Heart left ventricle (tissue), 16 donors: ENCODE measurements at regions of chr2 and their contacts with region 1.

Region 1: DNA sequence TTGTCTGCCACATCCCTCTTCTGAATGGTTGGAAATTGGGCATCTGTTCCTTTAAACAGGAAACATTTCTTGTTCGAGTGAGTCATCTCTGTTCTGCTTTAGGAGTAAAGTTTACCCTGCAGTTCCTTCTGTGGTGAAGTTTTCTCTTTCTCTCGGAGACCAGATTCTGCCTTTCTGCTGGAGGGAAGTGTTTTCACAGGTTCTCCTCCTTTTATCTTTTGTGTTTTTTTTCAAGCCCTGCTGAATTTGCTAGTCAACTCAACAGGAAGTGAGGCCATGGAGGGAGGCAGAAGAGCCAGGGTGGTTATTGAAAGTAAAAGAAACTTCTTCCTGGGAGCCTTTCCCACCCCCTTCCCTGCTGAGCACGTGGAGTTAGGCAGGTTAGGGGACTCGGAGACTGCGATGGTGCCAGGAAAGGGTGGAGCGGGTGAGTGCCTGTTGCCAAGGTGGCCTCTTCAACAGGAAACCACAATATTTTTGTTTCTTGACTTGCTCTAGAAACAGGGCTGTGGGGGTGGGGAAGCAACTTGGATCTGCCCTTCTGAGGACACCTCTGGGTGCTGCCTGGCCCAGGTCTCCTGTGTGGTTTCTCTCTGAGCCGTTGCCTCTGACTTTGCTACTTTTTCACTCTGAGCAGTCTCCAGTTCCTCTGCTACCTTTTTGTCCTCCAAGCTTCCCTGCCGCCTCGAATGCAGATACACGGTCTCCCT is 2.2 kb upstream of the CASP8 start:
- DNase-seq: peak; percentile 60 to 76 (median 67)
- ATAC-seq: peak; percentile 52 to 84 (median 78)
- H3K4me3 ChIP-seq: peak overlapping the region; percentile 16 to 73 (median 60)
- H3K27ac ChIP-seq: peak overlapping the region; percentile 52 to 97 (median 84)
- H3K4me1 ChIP-seq: peaks cover 0 to 79% (median 4%) of the 10 kb centered on the region in 12 donors
- H3K27me3 ChIP-seq: no peaks in the 10 kb centered on the region
- CTCF ChIP-seq: no peak
- POLR2A ChIP-seq: no peak

Region 2: GRCh38 chr2:201357241-201357640 is 99.1 kb after region 1 on chr2 and contains the start of gene FLACC1:
- intact Hi-C with region 1: loop called in 1 of 10 experiments (anchors 5 kb)
- DNase-seq: peak in 3 of 5 donors; percentile 44 to 61 (median 53)
- ATAC-seq: peak; percentile 90 to 97 (median 92)
- H3K4me3 ChIP-seq: peak within 1 kb of the TSS in 7 of 12 donors; percentile 23 to 47 (median 34)
- H3K27ac ChIP-seq: peak within 1 kb of the TSS; percentile 55 to 91 (median 80)
- H3K4me1 ChIP-seq: peaks cover 0 to 22% (median 7%) of the 10 kb centered on the region in 12 donors
- H3K27me3 ChIP-seq: no peaks in the 10 kb centered on the region
- CTCF ChIP-seq: no peak
- POLR2A ChIP-seq: no peak
- total RNA-seq, gene FLACC1: 3.9 to 8.1 (median 7.2) TPM